ENCODE measurements at regions of chr4 and their contacts with region 1.

Region 1: GRCh38 chr4:158768555-158769174 is at the start of gene FNIP2:
- DNase-seq: peak; percentile 71
- H3K4me3 Mint-ChIP-seq: peak within 1 kb of the TSS; percentile 99
- H3K27ac Mint-ChIP-seq: peak within 1 kb of the TSS; percentile 90
- H3K4me1 Mint-ChIP-seq: peaks cover 43% of the 10 kb centered on the region
- H3K27me3 Mint-ChIP-seq: no peaks in the 10 kb centered on the region
- total RNA-seq, gene FNIP2: 16.9 to 17.3 TPM

Region 2: GRCh38 chr4:158754385-158755180 is 14.1 kb before region 1 on chr4:
- CTCF ChIA-PET with region 1: no interaction called
- POLR2A ChIA-PET with region 1: no interaction called
- DNase-seq: no peak
- H3K4me3 Mint-ChIP-seq: no peak overlapping the region
- H3K27ac Mint-ChIP-seq: no peak overlapping the region
- H3K4me1 Mint-ChIP-seq: no peaks in the 10 kb centered on the region
- H3K27me3 Mint-ChIP-seq: peaks cover 13% of the 10 kb centered on the region

Region 3: GRCh38 chr4:158826057-158826456 is 57.4 kb after region 1 on chr4:
- CTCF ChIA-PET with region 1: interaction called, 4 read pairs
- POLR2A ChIA-PET with region 1: interaction called, 13 read pairs
- DNase-seq: no peak
- H3K4me3 Mint-ChIP-seq: no peak overlapping the region
- H3K27ac Mint-ChIP-seq: peak overlapping the region; percentile 25
- H3K4me1 Mint-ChIP-seq: peaks cover 67% of the 10 kb centered on the region
- H3K27me3 Mint-ChIP-seq: no peaks in the 10 kb centered on the region